HEK293T (cell line): ENCODE measurements at regions of chr11 and their contacts with region 1.

Region 1: DNA sequence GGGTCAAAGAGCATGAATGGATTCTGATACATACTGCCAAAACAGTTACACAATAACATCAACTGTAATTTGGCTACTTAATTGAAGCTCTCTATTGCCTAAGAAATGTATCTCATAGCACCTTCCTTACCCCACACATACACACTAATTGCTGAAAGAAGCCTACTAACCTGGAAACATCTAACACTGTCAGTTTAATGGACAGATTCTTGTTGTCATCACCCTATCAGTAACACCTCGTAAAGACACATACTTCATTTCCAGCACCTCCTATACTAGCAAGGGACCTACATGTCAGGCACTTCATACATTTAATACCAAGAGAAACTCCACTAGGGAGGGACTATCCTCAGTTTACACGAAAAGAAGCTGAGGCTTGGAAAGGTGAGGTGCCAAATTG is 9.9 kb downstream of the NAP1L4 start:
- DNase-seq: no peak

Region 2: GRCh38 chr11:2850371-2850770 is 131.8 kb before region 1 on chr11:
- CTCF ChIA-PET with region 1: no interaction called
- POLR2A ChIA-PET with region 1: no interaction called
- DNase-seq: no peak

Region 3: GRCh38 chr11:2992234-2992996 is 10.2 kb after region 1 on chr11 and contains the start of gene NAP1L4:
- CTCF ChIA-PET with region 1: interaction called, 3 read pairs
- POLR2A ChIA-PET with region 1: interaction called, 44 read pairs
- DNase-seq: peak; percentile 96